Panc1 (cell line): ENCODE measurements at regions of chr21 and their contacts with region 1.

Region 1: GRCh38 chr21:14361958-14362357 is 21.0 kb downstream of the HSPA13 start:
- DNase-seq: no peak
- ATAC-seq: no peak
- H3K4me3 ChIP-seq: no peak overlapping the region
- H3K27ac ChIP-seq: no peak overlapping the region
- H3K4me1 ChIP-seq: no peaks in the 10 kb centered on the region
- H3K27me3 ChIP-seq: no peaks in the 10 kb centered on the region
- CTCF ChIP-seq: no peak

Region 2: GRCh38 chr21:14099570-14099969 is 262.4 kb before region 1 on chr21:
- CTCF ChIA-PET with region 1: interaction called, 10 read pairs
- POLR2A ChIA-PET with region 1: no interaction called
- in situ Hi-C with region 1: no loop called
- intact Hi-C with region 1: no loop called
- DNase-seq: no peak
- ATAC-seq: no peak
- H3K4me3 ChIP-seq: no peak overlapping the region
- H3K27ac ChIP-seq: no peak overlapping the region
- H3K4me1 ChIP-seq: no peaks in the 10 kb centered on the region
- H3K27me3 ChIP-seq: no peaks in the 10 kb centered on the region
- CTCF ChIP-seq: no peak